ENCODE measurements at regions of chr10 and their contacts with region 1.

Region 1: DNA sequence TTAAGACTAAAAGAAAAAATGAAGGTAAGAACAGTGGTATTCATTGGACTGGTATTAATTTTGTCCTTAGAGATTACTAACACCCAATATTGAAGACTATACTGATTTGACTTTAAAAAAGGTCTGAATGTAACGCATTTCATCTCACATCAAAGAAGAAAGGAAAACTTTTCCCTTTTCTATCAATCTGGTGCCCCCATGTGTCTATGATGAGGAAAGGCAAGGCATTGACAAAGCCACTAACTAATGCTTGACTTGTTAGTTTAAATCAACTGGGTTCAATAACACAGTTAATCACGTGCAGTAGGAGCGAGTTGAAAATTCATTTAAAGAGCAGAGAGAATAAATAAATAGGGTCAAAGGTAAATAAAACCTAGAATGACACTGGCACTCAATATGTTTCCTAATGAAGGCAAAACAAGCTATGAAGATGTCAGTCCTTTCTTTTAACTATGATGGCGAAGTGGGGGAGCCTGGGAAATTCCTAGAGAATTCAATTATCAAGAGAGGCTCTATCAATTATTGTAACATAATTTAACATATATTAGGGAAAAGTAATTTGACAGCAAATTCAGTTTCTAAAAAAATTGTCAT is 180.9 kb downstream of the ANK3 start:
- DNase-seq: peak; percentile 22
- H3K4me3 ChIP-seq: no peak overlapping the region
- H3K27ac ChIP-seq: no peak overlapping the region
- H3K4me1 ChIP-seq: no peaks in the 10 kb centered on the region
- H3K27me3 ChIP-seq: no peaks in the 10 kb centered on the region
- CTCF ChIP-seq: peak; percentile 85
- EP300 ChIP-seq: no peak
- RAD21 ChIP-seq: peak; percentile 93

Region 2: DNA sequence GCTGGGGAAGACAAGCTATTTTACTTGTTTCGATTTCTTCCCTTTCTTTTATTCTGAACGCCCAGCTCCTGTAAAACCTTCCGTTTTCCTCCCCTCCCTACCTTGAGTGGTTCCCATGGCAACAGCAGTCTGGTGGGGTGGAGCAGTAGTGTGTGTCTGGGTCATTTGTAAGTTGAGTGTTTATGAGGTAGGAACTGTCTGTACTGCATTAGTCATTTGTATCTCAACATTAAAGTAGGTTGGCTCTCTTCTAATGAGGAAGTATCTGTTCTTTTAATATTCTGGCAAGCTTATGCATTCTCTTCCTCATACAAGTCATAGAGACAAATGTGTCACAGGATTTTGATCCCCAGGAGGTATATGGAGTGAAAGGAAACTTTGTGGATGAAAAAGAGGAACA is 217.1 kb before region 1 on chr10:
- CTCF ChIA-PET with region 1: no interaction called
- POLR2A ChIA-PET with region 1: no interaction called
- DNase-seq: no peak
- H3K4me3 ChIP-seq: no peak overlapping the region
- H3K27ac ChIP-seq: no peak overlapping the region
- H3K4me1 ChIP-seq: no peaks in the 10 kb centered on the region
- H3K27me3 ChIP-seq: no peaks in the 10 kb centered on the region
- CTCF ChIP-seq: no peak
- EP300 ChIP-seq: no peak
- RAD21 ChIP-seq: no peak

Region 3: DNA sequence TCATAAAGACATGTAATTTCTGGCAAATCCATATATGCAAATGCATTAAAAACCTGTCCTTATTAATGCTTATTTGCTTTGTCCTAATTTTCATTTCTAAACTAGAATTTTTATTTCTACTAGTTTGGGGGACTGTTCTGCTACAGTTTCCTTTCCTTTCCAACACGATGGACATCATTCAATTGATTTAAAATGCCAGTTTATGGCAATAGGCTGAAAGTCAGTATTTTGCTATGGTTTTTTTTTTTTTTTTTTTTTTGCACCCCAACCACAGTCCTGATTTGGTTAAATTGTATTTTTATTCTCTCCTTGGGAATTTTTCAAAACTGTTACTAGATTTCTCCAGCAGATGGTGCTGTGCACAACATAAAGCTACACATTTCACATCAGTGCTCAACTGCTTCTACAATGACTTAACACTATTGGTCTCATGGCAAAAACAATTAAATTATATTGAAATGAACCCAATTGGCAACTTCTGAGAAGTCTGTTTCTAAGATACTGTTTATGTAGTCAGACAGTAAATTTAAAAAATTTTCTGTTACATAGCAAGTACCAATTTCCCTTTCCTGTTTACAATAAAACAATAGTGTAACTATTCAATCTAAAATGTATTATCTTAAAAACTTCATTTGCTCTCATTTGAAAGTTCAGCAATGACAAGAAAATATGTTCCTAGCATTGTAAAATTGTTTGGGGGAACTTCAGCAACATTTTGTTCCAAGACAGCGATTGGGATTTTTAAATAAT is 108.6 kb before region 1 on chr10:
- CTCF ChIA-PET with region 1: interaction called, 99 read pairs
- POLR2A ChIA-PET with region 1: no interaction called
- DNase-seq: peak; percentile 37
- H3K4me3 ChIP-seq: no peak overlapping the region; a peak in 1 of 4 replicates
- H3K27ac ChIP-seq: no peak overlapping the region
- H3K4me1 ChIP-seq: no peaks in the 10 kb centered on the region; a peak in 2 of 4 replicates
- H3K27me3 ChIP-seq: no peaks in the 10 kb centered on the region
- CTCF ChIP-seq: peak; percentile 71
- EP300 ChIP-seq: no peak
- RAD21 ChIP-seq: peak; percentile 85

Region 4: DNA sequence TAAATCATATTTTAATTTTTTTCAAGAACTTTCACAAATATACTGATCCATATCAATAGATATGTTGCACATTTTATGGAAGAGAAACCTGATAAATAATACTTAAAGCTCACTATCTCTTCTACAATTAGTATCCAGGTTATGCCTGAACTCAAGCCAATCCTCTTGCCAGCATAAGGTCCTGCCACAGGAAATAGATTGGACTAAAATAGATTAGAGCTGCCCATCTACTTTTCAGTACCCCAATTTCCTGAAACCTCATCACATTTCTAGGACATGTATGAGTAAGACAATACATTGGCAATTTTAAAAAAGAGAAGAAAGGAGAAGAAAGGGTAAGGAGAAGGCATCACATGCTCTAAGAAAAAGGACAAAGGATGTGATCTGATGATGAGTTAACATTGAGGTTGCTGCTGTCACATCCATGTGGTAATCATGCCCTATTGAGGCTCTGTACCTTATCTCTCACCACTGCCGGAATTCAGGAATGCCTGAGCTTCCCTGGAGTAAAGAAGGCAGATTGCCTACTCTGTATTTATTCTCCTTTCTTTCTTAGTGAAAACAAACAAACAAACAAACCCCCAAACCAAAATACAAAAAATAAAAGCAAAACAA is 18.8 kb before region 1 on chr10:
- CTCF ChIA-PET with region 1: interaction called, 11 read pairs
- POLR2A ChIA-PET with region 1: no interaction called
- DNase-seq: no peak
- H3K4me3 ChIP-seq: no peak overlapping the region
- H3K27ac ChIP-seq: no peak overlapping the region
- H3K4me1 ChIP-seq: no peaks in the 10 kb centered on the region
- H3K27me3 ChIP-seq: no peaks in the 10 kb centered on the region
- CTCF ChIP-seq: no peak
- EP300 ChIP-seq: no peak
- RAD21 ChIP-seq: no peak

Region 5: GRCh38 chr10:60224066-60224705 is 15.4 kb after region 1 on chr10:
- CTCF ChIA-PET with region 1: interaction called, 15 read pairs
- POLR2A ChIA-PET with region 1: no interaction called
- DNase-seq: peak; percentile 56
- H3K4me3 ChIP-seq: peak overlapping the region in 1 of 2 experiments; percentile 14; a peak in 1 of 4 replicates
- H3K27ac ChIP-seq: peak overlapping the region; percentile 47 to 92; a peak in 3 of 4 replicates
- H3K4me1 ChIP-seq: peaks cover 0 to 15% of the 10 kb centered on the region in 2 experiments; a peak in 2 of 4 replicates
- H3K27me3 ChIP-seq: no peaks in the 10 kb centered on the region
- CTCF ChIP-seq: no peak
- EP300 ChIP-seq: peak in 1 of 2 experiments; percentile 90; a peak in 2 of 4 replicates
- RAD21 ChIP-seq: peak; percentile 27

Region 6: DNA sequence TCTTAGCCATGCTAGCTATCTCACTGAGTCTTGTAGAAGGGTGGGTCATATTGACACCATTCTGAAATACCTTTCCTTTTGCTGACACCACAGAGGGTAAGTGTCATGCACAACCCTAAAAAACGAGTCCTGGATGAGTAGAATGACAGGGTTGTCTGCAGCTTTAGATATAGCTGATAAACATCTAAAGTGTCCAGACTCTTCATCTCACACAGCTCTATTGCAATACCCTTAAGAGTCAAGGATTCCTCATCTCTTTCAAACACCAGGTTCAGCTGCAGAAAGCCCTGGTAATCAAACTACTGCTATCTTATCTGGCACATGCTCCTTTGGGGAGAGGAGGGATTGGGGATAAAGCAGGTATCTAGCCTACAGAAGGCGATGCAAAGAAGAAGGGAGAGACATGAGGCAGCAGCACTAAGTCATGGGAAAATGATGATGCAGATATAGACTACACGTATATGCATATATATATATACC is 53.9 kb after region 1 on chr10:
- CTCF ChIA-PET with region 1: no interaction called
- POLR2A ChIA-PET with region 1: no interaction called
- DNase-seq: no peak
- H3K4me3 ChIP-seq: no peak overlapping the region
- H3K27ac ChIP-seq: no peak overlapping the region
- H3K4me1 ChIP-seq: peaks cover 0 to 2% of the 10 kb centered on the region in 2 experiments; a peak in 1 of 4 replicates
- H3K27me3 ChIP-seq: no peaks in the 10 kb centered on the region
- CTCF ChIP-seq: no peak
- EP300 ChIP-seq: no peak
- RAD21 ChIP-seq: no peak

Region 7: GRCh38 chr10:60403168-60403873 is 194.5 kb after region 1 on chr10:
- CTCF ChIA-PET with region 1: no interaction called
- POLR2A ChIA-PET with region 1: no interaction called
- DNase-seq: no peak
- H3K4me3 ChIP-seq: no peak overlapping the region
- H3K27ac ChIP-seq: no peak overlapping the region
- H3K4me1 ChIP-seq: peaks cover 0 to 4% of the 10 kb centered on the region in 2 experiments; a peak in 1 of 4 replicates
- H3K27me3 ChIP-seq: no peaks in the 10 kb centered on the region
- CTCF ChIP-seq: no peak
- EP300 ChIP-seq: no peak
- RAD21 ChIP-seq: no peak

Region 8: GRCh38 chr10:60444494-60445064 is 235.8 kb after region 1 on chr10:
- CTCF ChIA-PET with region 1: interaction called, 13 read pairs
- POLR2A ChIA-PET with region 1: no interaction called
- DNase-seq: no peak
- H3K4me3 ChIP-seq: no peak overlapping the region; a peak in 1 of 4 replicates
- H3K27ac ChIP-seq: peak overlapping the region in 1 of 2 experiments; percentile 48; a peak in 1 of 4 replicates
- H3K4me1 ChIP-seq: peaks cover 0 to 33% of the 10 kb centered on the region in 2 experiments
- H3K27me3 ChIP-seq: no peaks in the 10 kb centered on the region
- CTCF ChIP-seq: peak; percentile 79
- EP300 ChIP-seq: no peak
- RAD21 ChIP-seq: peak; percentile 81